ENCODE measurements at regions of chr14 and their contacts with region 1.

Region 1: GRCh38 chr14:24093901-24094761 is at the start of gene PCK2:
- DNase-seq: peak; percentile 76
- ATAC-seq: peak; percentile 69
- H3K4me3 Mint-ChIP-seq: peak within 1 kb of the TSS; percentile 99
- H3K27ac Mint-ChIP-seq: peak within 1 kb of the TSS; percentile 99
- H3K4me1 Mint-ChIP-seq: peaks cover 31% of the 10 kb centered on the region
- H3K27me3 Mint-ChIP-seq: no peaks in the 10 kb centered on the region
- CTCF ChIP-seq: no peak
- total RNA-seq, gene PCK2: 82.1 and 102 TPM in 2 replicates

Region 2: DNA sequence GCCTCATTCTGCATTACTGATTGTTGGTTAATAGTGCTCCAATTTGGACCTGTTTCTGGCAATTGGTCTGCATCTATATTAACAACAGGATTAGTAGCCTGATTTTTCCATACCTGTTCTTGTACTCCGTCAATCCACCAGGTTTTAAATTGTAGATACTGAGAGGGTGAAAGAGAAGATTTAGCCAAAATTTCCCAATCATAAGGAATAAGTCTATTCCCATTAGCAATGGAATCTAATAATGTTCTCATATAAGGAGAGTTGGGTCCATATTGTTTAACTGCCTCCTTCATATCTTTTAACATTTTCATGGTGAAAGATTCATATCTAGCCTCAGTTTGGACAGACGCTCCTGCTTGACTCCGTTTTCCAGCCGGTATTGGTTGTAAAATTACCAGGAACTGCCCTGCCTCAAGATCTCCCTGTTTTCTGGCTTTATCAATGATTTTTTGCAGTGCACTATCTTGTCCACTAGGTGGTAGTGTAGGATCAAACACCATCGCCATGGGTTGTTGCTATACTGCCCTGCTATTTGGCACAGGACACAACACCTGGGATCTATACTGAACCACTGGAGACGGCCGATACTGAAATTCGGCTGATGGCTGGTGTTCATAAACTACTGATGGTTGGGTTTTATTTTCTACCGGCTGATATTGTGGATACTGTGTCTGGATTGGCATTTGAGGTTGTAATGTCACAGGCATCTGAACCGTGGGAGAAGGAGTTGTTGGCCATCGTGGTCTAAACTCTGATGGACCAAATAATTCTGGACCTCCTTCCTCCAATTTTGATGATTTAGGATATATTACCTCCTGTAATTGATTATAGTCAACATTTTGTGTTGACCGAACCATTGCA is 80.2 kb before region 1 on chr14:
- CTCF ChIA-PET with region 1: interaction called, 15 read pairs
- POLR2A ChIA-PET with region 1: interaction called, 5 read pairs
- intact Hi-C with region 1: loop called (anchors 1 kb)
- DNase-seq: no peak
- ATAC-seq: peak; percentile 97
- H3K4me3 Mint-ChIP-seq: no peak overlapping the region
- H3K27ac Mint-ChIP-seq: no peak overlapping the region
- H3K4me1 Mint-ChIP-seq: peaks cover 20% of the 10 kb centered on the region
- H3K27me3 Mint-ChIP-seq: no peaks in the 10 kb centered on the region
- CTCF ChIP-seq: peak; percentile 48

Region 3: DNA sequence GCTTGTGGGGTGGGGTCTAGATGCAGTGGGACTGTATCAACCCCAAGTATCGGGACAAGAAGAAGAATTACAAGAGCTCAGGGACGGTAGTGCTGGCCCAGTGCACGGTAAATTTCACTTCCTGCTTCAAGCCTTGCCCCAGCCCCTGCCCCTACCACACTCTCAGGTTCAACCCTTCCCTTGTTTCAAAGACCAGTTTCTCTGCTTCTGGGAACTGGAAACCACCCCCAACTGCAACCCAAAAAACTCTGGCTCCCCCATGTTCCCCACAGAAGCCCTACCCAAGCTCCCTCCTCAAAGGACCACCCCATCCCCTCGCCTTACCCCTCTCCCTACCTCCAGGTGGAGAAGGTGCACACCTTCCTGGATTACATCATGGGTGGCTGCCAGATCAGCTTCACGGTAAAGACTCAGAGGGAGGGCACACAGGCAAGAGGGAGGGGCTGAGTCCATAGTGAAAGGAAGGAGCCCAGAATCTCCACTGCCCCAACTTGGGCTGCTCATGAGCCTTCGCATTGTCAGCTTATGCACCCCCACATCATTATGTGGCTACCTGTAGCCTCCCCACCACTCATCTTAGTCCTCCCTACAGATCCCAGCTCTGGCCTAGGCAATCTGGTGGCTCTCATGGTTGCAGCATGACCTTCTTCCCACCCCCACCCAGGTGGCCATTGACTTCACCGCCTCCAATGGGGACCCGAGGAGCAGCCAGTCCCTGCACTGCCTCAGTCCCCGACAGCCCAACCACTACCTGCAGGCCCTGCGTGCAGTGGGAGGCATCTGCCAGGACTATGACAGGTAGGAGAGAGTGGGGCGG is 18.4 kb before region 1 on chr14:
- CTCF ChIA-PET with region 1: interaction called, 24 read pairs
- POLR2A ChIA-PET with region 1: interaction called, 111 read pairs
- intact Hi-C with region 1: no loop called
- DNase-seq: no peak
- ATAC-seq: peak; percentile 90
- H3K4me3 Mint-ChIP-seq: peak overlapping the region; percentile 42
- H3K27ac Mint-ChIP-seq: peak overlapping the region; percentile 87
- H3K4me1 Mint-ChIP-seq: peaks cover 35% of the 10 kb centered on the region
- H3K27me3 Mint-ChIP-seq: no peaks in the 10 kb centered on the region
- CTCF ChIP-seq: no peak

Region 4: GRCh38 chr14:24123508-24124417 is 29.6 kb after region 1 on chr14:
- CTCF ChIA-PET with region 1: no interaction called
- POLR2A ChIA-PET with region 1: interaction called, 12 read pairs
- intact Hi-C with region 1: no loop called
- DNase-seq: no peak
- ATAC-seq: peak; percentile 83
- H3K4me3 Mint-ChIP-seq: peak overlapping the region; percentile 52
- H3K27ac Mint-ChIP-seq: peak overlapping the region; percentile 93
- H3K4me1 Mint-ChIP-seq: peaks cover 38% of the 10 kb centered on the region
- H3K27me3 Mint-ChIP-seq: no peaks in the 10 kb centered on the region
- CTCF ChIP-seq: no peak

Region 5: GRCh38 chr14:24146978-24147760 is 53.0 kb after region 1 on chr14 and contains the start of gene RNF31:
- CTCF ChIA-PET with region 1: interaction called, 8 read pairs
- POLR2A ChIA-PET with region 1: interaction called, 51 read pairs
- intact Hi-C with region 1: loop called (anchors 1 kb)
- DNase-seq: peak; percentile 91
- ATAC-seq: peak; percentile 85
- H3K4me3 Mint-ChIP-seq: peak within 1 kb of the TSS; percentile 97
- H3K27ac Mint-ChIP-seq: peak within 1 kb of the TSS; percentile 94
- H3K4me1 Mint-ChIP-seq: peaks cover 51% of the 10 kb centered on the region
- H3K27me3 Mint-ChIP-seq: no peaks in the 10 kb centered on the region
- CTCF ChIP-seq: no peak
- total RNA-seq, gene RNF31: 87.4 and 99.8 TPM in 2 replicates

Region 6: DNA sequence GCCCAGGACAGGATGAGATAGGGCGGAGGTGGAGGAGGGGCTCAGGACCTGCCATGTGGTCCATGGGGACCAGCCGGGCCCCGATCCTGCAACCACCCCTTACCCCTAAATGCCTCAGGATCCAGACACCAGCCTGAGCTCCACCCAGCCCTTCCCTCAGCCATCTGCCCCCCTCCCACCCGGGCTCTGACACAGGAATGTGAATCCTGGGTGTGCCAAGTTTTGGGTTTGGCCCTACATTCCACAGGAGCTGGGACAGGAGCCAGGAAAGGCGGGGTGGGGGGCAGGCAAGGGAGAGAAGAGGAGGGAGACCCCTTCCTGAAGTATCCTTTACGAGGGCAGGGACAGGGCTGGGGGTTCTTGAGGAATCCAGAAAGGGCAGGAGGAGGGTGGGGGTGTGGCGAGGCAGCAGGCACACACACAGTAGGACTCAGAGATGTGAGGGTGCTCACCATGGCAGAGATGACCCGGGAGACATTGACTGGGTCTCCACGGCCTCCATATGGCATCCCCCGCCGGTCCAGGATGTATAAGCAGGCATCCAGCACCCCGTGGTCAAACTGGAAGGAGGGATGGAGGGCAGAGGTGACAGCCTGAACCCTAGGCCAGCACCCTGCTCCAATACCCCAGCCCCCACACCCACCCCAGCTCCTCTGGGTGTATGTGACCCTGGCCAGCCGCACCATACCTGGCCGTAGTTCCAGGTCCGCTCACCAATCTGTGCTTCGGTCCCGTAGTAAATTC is 165.3 kb after region 1 on chr14:
- CTCF ChIA-PET with region 1: no interaction called
- POLR2A ChIA-PET with region 1: no interaction called
- intact Hi-C with region 1: no loop called
- DNase-seq: no peak
- ATAC-seq: no peak
- H3K4me3 Mint-ChIP-seq: no peak overlapping the region
- H3K27ac Mint-ChIP-seq: no peak overlapping the region
- H3K4me1 Mint-ChIP-seq: no peaks in the 10 kb centered on the region
- H3K27me3 Mint-ChIP-seq: no peaks in the 10 kb centered on the region
- CTCF ChIP-seq: no peak

Region 7: GRCh38 chr14:24310646-24311604 is 216.8 kb after region 1 on chr14 and contains the start of gene LTB4R:
- CTCF ChIA-PET with region 1: interaction called, 3 read pairs
- POLR2A ChIA-PET with region 1: interaction called, 14 read pairs
- intact Hi-C with region 1: no loop called
- DNase-seq: peak; percentile 73
- ATAC-seq: peak; percentile 78
- H3K4me3 Mint-ChIP-seq: peak within 1 kb of the TSS; percentile 75
- H3K27ac Mint-ChIP-seq: peak within 1 kb of the TSS; percentile 80
- H3K4me1 Mint-ChIP-seq: peaks cover 59% of the 10 kb centered on the region
- H3K27me3 Mint-ChIP-seq: no peaks in the 10 kb centered on the region
- CTCF ChIP-seq: no peak
- total RNA-seq, gene LTB4R: 8.2 and 8.6 TPM in 2 replicates

Measured in activated B cell treated with CpG ODN at 0.5 μM for 24 hours (primary cell).